ENCODE measurements at regions of chr17 and their contacts with region 1.

Region 1: DNA sequence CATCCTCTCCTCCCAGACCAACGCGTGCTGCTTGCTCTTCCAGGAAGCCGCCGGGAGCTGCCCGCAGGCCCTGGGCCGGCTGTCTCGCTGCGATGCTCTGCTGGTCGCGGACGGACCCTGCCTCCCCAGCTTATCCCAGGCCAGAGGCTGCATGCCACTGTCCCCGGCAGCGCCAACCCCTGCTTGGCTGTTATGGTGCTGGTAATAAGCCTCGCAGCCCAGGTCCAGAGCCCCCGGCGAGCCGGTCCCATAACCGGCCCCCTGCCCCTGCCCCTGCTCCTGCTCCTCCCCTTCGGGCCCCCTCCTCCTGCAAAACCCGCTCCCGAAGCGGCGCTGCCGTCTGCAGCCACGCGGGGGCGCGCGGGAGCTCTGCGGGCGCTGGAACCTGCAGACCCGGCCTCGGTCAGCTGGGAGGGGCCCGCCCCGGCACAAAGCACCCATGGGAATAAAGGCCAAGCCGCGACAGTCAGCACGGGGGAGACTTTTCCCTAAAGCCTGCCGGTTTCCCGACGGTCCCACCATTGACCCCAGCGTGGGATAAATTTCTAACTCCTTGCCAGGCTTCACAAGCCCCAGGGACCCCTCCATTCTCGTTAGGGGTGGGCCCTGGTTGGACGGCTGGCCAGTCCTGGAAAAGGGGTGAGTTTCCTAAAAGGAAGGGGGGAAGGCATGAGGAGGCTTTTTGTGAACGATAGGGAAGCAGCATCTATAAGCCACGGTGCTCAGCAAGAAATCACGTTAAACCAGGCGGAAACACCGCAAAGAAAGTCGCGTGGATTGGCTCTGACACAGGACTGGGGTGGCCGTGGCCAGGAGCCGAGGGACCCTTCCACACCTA is 11.2 kb downstream of the ENPP7 start:
- DNase-seq: peak; percentile 95
- ATAC-seq: peak; percentile 80
- H3K4me3 Mint-ChIP-seq: peak overlapping the region; percentile 53
- H3K27ac Mint-ChIP-seq: no peak overlapping the region
- H3K4me1 Mint-ChIP-seq: peaks cover 7% of the 10 kb centered on the region
- H3K27me3 Mint-ChIP-seq: peaks cover 68% of the 10 kb centered on the region
- CTCF ChIP-seq: peak; percentile 92

Region 2: GRCh38 chr17:79581324-79581932 is 160.5 kb before region 1 on chr17:
- CTCF ChIA-PET with region 1: no interaction called
- POLR2A ChIA-PET with region 1: no interaction called
- DNase-seq: no peak
- ATAC-seq: no peak
- H3K4me3 Mint-ChIP-seq: no peak overlapping the region
- H3K27ac Mint-ChIP-seq: no peak overlapping the region
- H3K4me1 Mint-ChIP-seq: no peaks in the 10 kb centered on the region
- H3K27me3 Mint-ChIP-seq: no peaks in the 10 kb centered on the region; the same call in 1 of the 2 replicates
- CTCF ChIP-seq: no peak

Region 3: DNA sequence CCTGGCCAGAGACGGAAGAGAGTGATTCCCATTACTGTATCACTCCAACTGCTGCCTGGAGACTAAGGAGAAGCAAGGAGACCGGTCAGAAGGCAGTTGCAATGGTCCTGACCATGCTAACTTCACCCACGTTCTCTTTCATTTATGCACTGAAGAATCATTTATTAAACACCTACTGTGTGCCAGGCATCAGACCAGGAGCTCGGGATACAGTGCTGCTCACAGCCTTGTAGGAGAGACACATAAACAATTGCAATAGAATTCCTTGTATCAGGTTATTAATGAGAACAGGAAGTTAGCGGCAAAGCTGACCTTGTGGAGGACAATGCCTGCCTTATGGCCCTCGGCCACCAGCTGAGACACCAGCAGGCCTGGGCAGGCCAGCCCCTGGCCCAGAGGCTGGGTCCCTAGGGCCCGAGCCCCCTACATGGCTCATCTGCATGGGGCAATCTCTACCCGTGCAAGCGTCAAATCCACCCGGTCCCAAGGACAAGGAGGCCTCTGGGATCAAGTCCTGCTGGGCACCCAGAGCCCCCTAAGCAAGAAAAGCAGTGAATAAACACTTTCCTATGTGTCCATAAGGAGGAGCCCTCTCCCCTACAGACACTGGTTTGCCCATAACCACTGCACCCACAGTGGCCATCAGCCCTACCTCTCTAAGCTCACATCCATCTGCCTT is 19.8 kb before region 1 on chr17:
- CTCF ChIA-PET with region 1: interaction called, 65 read pairs
- POLR2A ChIA-PET with region 1: interaction called, 3 read pairs
- DNase-seq: peak; percentile 31
- ATAC-seq: peak; percentile 96
- H3K4me3 Mint-ChIP-seq: no peak overlapping the region
- H3K27ac Mint-ChIP-seq: no peak overlapping the region
- H3K4me1 Mint-ChIP-seq: peaks cover 8% of the 10 kb centered on the region; the same call in 1 of the 2 replicates
- H3K27me3 Mint-ChIP-seq: peaks cover 4% of the 10 kb centered on the region; the same call in 1 of the 2 replicates
- CTCF ChIP-seq: peak; percentile 27; the same call in 1 of the 2 replicates

Region 4: DNA sequence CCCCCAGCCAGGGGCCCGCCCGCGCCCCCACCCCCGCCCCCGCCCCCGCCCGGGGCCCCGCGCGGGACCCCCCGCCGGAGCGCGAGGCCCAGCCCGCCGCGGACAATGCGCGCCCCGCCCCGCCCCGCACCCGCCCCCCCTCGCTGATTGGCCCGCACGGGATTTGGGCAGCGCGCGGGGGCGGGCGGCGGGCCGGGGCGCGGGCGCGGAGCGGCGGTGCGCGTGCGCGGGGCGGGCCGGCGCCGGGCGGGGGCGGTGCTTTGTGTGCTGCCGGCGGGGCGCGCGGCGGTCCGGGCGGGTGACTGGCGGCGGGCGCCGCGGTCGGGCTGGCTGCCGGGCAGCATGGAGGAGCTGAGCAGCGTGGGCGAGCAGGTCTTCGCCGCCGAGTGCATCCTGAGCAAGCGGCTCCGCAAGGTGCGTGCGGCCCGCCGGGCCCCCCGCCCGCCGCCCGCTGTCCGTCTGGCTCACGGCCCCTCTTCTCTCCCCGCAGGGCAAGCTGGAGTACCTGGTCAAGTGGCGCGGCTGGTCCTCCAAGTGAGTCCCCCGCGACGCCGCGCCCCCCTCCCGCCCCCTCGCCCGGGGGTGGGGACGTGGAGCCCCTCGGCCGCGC is 36.0 kb after region 1 on chr17 and contains the start of gene CBX2:
- CTCF ChIA-PET with region 1: interaction called, 83 read pairs
- POLR2A ChIA-PET with region 1: no interaction called
- DNase-seq: peak; percentile 75
- ATAC-seq: peak; percentile 55
- H3K4me3 Mint-ChIP-seq: peak within 1 kb of the TSS; percentile 91
- H3K27ac Mint-ChIP-seq: peak within 1 kb of the TSS; percentile 93
- H3K4me1 Mint-ChIP-seq: peaks cover 54% of the 10 kb centered on the region
- H3K27me3 Mint-ChIP-seq: peaks cover 15% of the 10 kb centered on the region
- CTCF ChIP-seq: no peak
- total RNA-seq, gene CBX2: 78.1 to 85.5 TPM (median 78.7 TPM) in 3 replicates

Region 5: DNA sequence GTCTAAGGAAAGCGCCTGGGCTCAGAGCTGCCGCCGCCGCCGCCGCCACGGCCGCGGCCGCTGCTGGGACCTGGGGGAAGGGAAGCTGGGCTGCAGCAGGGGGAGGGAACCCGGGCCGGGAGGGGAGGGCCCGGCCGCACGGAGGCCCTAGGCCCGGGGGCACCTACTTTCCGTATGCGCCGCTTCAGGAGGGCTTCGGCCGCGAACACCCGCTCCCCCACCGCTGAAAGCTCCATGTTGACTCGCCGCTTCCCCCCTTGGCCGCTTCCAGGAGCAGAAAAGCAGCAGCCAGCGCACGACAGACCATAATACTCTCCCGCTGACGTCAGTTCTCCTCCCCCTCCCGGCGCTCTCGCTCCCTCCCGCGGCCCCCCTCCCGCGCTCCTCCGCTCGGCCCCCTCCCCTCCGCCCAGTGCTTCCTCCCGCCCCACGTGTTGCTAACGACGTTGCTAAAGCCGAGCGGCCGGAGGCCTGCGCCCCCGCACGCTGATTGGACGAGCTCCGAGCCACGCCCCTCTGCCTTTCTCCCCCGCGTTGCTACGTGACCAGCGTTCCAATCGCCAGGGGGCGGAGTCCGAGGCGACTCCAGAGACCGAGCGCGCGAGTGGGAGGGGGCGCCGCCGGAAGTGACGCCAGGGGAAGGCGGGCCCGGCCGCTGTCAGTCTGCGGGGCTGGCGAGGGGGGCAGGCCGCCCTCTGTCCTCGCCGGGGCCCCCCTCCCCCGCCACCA is 55.0 kb after region 1 on chr17 and contains the start of gene CBX8:
- CTCF ChIA-PET with region 1: interaction called, 30 read pairs
- POLR2A ChIA-PET with region 1: interaction called, 9 read pairs
- DNase-seq: peak; percentile 100
- ATAC-seq: peak; percentile 71
- H3K4me3 Mint-ChIP-seq: peak within 1 kb of the TSS; percentile 68
- H3K27ac Mint-ChIP-seq: no peak within 1 kb of the TSS
- H3K4me1 Mint-ChIP-seq: peaks cover 47% of the 10 kb centered on the region
- H3K27me3 Mint-ChIP-seq: peaks cover 94% of the 10 kb centered on the region
- CTCF ChIP-seq: no peak
- total RNA-seq, gene CBX8: 1.8 to 2.1 TPM (median 2.0 TPM) in 3 replicates

Region 6: GRCh38 chr17:79810130-79811010 is 68.4 kb after region 1 on chr17:
- CTCF ChIA-PET with region 1: interaction called, 24 read pairs
- POLR2A ChIA-PET with region 1: interaction called, 3 read pairs
- DNase-seq: peak; percentile 83
- ATAC-seq: peak; percentile 74
- H3K4me3 Mint-ChIP-seq: peak overlapping the region; percentile 59
- H3K27ac Mint-ChIP-seq: no peak overlapping the region
- H3K4me1 Mint-ChIP-seq: peaks cover 40% of the 10 kb centered on the region
- H3K27me3 Mint-ChIP-seq: peaks cover 92% of the 10 kb centered on the region
- CTCF ChIP-seq: no peak

Region 7: GRCh38 chr17:79933863-79934652 is 192.1 kb after region 1 on chr17:
- CTCF ChIA-PET with region 1: interaction called, 10 read pairs
- POLR2A ChIA-PET with region 1: no interaction called
- DNase-seq: no peak
- ATAC-seq: no peak
- H3K4me3 Mint-ChIP-seq: no peak overlapping the region
- H3K27ac Mint-ChIP-seq: peak overlapping the region; percentile 49; the same call in 1 of the 2 replicates
- H3K4me1 Mint-ChIP-seq: peaks cover 77% of the 10 kb centered on the region
- H3K27me3 Mint-ChIP-seq: peaks cover under 1% of the 10 kb centered on the region
- CTCF ChIP-seq: no peak

Measured in WTC11 (cell line).